ENCODE measurements at regions of chr3 and their contacts with region 1.

Region 1: GRCh38 chr3:189148081-189148507 is 23.7 kb upstream of the TPRG1 start:
- DNase-seq: peak; percentile 33 to 64
- ATAC-seq: peak; percentile 76 to 89 (median 80)
- H3K4me3 ChIP-seq: no peak overlapping the region
- H3K27ac ChIP-seq: peak overlapping the region; percentile 48
- H3K4me1 ChIP-seq: peaks cover 26% of the 10 kb centered on the region
- H3K27me3 ChIP-seq: no peaks in the 10 kb centered on the region
- CTCF ChIP-seq: peak; percentile 78

Region 2: GRCh38 chr3:188962253-188963247 is 185.5 kb before region 1 on chr3:
- intact Hi-C with region 1: loop called in 1 of 2 experiments (anchors 10 kb)
- DNase-seq: no peak
- ATAC-seq: peak in 1 of 4 donors; percentile 26
- H3K4me3 ChIP-seq: no peak overlapping the region
- H3K27ac ChIP-seq: no peak overlapping the region
- H3K4me1 ChIP-seq: peaks cover 12% of the 10 kb centered on the region
- H3K27me3 ChIP-seq: no peaks in the 10 kb centered on the region
- CTCF ChIP-seq: no peak

Measured in psoas muscle (tissue), 8 donors.